HepG2 (cell line): ENCODE measurements at regions of chr6 and their contacts with region 1.

Region 1: GRCh38 chr6:84685983-84686584 is 78.3 kb downstream of the TBX18 start:
- DNase-seq: peak; percentile 14
- ATAC-seq: no peak
- H3K4me3 ChIP-seq: no peak overlapping the region
- H3K27ac ChIP-seq: no peak overlapping the region
- H3K4me1 ChIP-seq: no peaks in the 10 kb centered on the region
- H3K27me3 ChIP-seq: no peaks in the 10 kb centered on the region
- CTCF ChIP-seq: peak; percentile 48
- EP300 ChIP-seq: no peak
- POLR2A ChIP-seq: no peak
- RAD21 ChIP-seq: no peak

Region 2: GRCh38 chr6:84428300-84428907 is 257.7 kb before region 1 on chr6:
- CTCF ChIA-PET with region 1: no interaction called
- POLR2A ChIA-PET with region 1: no interaction called
- in situ Hi-C with region 1: no loop called
- intact Hi-C with region 1: loop called (anchors 5 kb)
- DNase-seq: peak; percentile 16
- ATAC-seq: peak; percentile 72
- H3K4me3 ChIP-seq: no peak overlapping the region
- H3K27ac ChIP-seq: no peak overlapping the region
- H3K4me1 ChIP-seq: no peaks in the 10 kb centered on the region
- H3K27me3 ChIP-seq: no peaks in the 10 kb centered on the region; a peak in 1 of 5 replicates
- CTCF ChIP-seq: peak; percentile 70
- EP300 ChIP-seq: no peak
- POLR2A ChIP-seq: no peak
- RAD21 ChIP-seq: peak; percentile 36; the same call in 1 of the 2 replicates

Region 3: GRCh38 chr6:85824326-85824725 is 1138.2 kb after region 1 on chr6:
- CTCF ChIA-PET with region 1: no interaction called
- POLR2A ChIA-PET with region 1: no interaction called
- in situ Hi-C with region 1: no loop called
- intact Hi-C with region 1: no loop called
- DNase-seq: no peak
- ATAC-seq: 0 out of 3 replicates have a peak, but pooled peaks have one; percentile 30
- H3K4me3 ChIP-seq: no peak overlapping the region
- H3K27ac ChIP-seq: no peak overlapping the region
- H3K4me1 ChIP-seq: no peaks in the 10 kb centered on the region
- H3K27me3 ChIP-seq: no peaks in the 10 kb centered on the region
- CTCF ChIP-seq: peak; percentile 28; the same call in 1 of the 2 replicates
- EP300 ChIP-seq: no peak
- POLR2A ChIP-seq: no peak
- RAD21 ChIP-seq: no peak